ENCODE measurements at regions of chr7 and their contacts with region 1.

Region 1: DNA sequence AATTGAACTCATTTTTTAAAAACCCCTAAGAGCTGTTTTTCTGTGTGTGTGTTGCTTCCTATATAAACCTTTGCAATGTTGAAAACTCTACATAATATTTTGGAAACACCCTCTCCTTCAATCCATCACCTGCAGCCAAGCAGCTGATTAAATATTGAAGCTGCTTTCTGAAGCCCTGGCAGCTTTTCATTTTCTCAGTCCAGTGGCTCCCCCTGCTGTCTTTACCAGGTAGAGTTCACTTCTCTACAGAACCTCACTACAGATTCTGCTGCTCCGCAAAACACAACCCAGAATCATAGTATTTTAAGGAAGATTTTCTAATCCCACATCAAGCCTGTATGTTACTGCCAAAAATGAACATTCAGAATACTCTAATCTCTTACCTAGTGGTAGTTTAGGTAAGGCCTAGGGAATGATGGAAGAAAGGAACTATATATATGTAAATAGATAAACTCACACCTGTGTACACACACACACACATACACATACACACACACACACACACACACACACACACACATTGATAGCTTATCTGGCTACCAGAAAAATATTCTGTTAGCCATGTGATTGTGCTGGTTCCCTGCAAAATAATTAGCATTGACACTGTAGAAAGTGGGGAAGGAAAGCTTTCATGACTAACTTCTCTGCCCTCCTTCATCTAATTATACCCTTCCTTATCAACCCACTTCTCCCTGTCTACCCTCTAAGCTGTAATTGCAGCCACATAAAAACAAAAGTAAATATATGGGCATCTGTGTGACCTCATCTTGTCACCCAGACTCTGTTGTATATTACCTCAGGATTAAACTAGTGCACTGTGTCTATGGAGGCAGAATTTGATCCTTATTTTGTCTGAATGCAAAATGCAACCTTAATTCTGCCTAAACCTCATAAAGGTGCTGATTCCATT is 229.5 kb upstream of the FZD1 start:
- DNase-seq: peak; percentile 31 to 81 (median 48)
- H3K4me3 ChIP-seq: no peak overlapping the region
- H3K27ac ChIP-seq: no peak overlapping the region
- H3K4me1 ChIP-seq: no peaks in the 10 kb centered on the region
- H3K27me3 ChIP-seq: no peaks in the 10 kb centered on the region
- CTCF ChIP-seq: peak; percentile 14 to 62 (median 52)
- POLR2A ChIP-seq: no peak

Region 2: GRCh38 chr7:90552521-90552920 is 482.2 kb before region 1 on chr7:
- intact Hi-C with region 1: loop called in 1 of 2 experiments (anchors 10 kb)
- DNase-seq: no peak
- H3K4me3 ChIP-seq: no peak overlapping the region
- H3K27ac ChIP-seq: no peak overlapping the region
- H3K4me1 ChIP-seq: no peaks in the 10 kb centered on the region
- H3K27me3 ChIP-seq: no peaks in the 10 kb centered on the region
- CTCF ChIP-seq: peak; percentile 5 to 52 (median 32)
- POLR2A ChIP-seq: no peak

Measured in adrenal gland (tissue), 19 donors.